Psoas muscle (tissue), 8 donors: ENCODE measurements at regions of chr17 and their contacts with region 1.

Region 1: GRCh38 chr17:7851438-7852256 is 3.2 kb upstream of the TMEM88 start:
- DNase-seq: peak; percentile 90 to 96
- ATAC-seq: peak; percentile 80 to 86 (median 86)
- H3K4me3 ChIP-seq: peak overlapping the region; percentile 22
- H3K27ac ChIP-seq: peak overlapping the region; percentile 23
- H3K4me1 ChIP-seq: peaks cover 19% of the 10 kb centered on the region
- H3K27me3 ChIP-seq: no peaks in the 10 kb centered on the region
- CTCF ChIP-seq: peak; percentile 99

Region 2: GRCh38 chr17:7740481-7741001 is 111.1 kb before region 1 on chr17:
- intact Hi-C with region 1: loop called in 1 of 2 experiments (anchors 5 kb)
- DNase-seq: peak in 1 of 2 donors; percentile 57
- ATAC-seq: no peak
- H3K4me3 ChIP-seq: peak overlapping the region; percentile 42
- H3K27ac ChIP-seq: no peak overlapping the region
- H3K4me1 ChIP-seq: no peaks in the 10 kb centered on the region
- H3K27me3 ChIP-seq: peaks cover 0 to 31% (median 0%) of the 10 kb centered on the region in 3 donors
- CTCF ChIP-seq: no peak

Region 3: GRCh38 chr17:7834962-7835813 is 16.5 kb before region 1 on chr17:
- intact Hi-C with region 1: loop called in 1 of 2 experiments (anchors 2 kb)
- DNase-seq: peak; percentile 98
- ATAC-seq: peak; percentile 79 to 83 (median 81)
- H3K4me3 ChIP-seq: peak overlapping the region; percentile 85
- H3K27ac ChIP-seq: peak overlapping the region; percentile 96
- H3K4me1 ChIP-seq: peaks cover 27% of the 10 kb centered on the region
- H3K27me3 ChIP-seq: no peaks in the 10 kb centered on the region
- CTCF ChIP-seq: peak; percentile 69